Activated T-helper 1 cell treated with anti-CD3 and anti-CD28 coated beads, Interleukin-12 subunit alpha, Interleukin-12 subunit beta, Interleukin-2, Interleukin-4 antibody, amounts not matched to agents 30 ng/mL and 10 ng/mL and 1 ng/mL, durations not matched to agents 14 hours and 24 hours and 36 hours (primary cell): ENCODE measurements at regions of chr1 and their contacts with region 1.

Region 1: GRCh38 chr1:179142889-179143299 is 61.0 kb downstream of the TOR3A start:
- DNase-seq: no peak
- H3K4me3 Mint-ChIP-seq: peak overlapping the region; percentile 63
- H3K27ac Mint-ChIP-seq: no peak overlapping the region
- H3K4me1 Mint-ChIP-seq: peaks cover 31% of the 10 kb centered on the region
- H3K27me3 Mint-ChIP-seq: no peaks in the 10 kb centered on the region

Region 2: DNA sequence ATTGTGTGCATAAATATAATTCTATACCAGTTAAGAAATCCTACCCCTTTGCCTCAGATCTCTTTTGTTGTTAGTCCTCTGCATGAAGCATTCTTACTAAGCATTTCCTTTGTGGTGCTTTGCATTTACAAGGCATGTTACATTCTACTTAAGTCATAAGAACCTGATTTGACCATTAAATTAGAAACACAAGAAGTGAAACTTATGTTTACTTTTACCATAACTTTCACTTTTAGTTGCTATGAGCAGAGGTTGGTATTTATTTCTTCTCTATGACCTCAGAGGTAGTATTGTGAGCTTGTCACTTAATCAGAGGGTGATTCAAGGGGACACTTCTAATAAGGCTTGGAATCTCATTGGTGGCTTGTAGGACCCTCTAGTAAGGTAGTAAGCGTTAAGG is 108.2 kb before region 1 on chr1:
- intact Hi-C with region 1: loop called (anchors 2 kb)
- DNase-seq: no peak
- H3K4me3 Mint-ChIP-seq: no peak overlapping the region
- H3K27ac Mint-ChIP-seq: peak overlapping the region; percentile 82
- H3K4me1 Mint-ChIP-seq: peaks cover 80% of the 10 kb centered on the region
- H3K27me3 Mint-ChIP-seq: no peaks in the 10 kb centered on the region

Region 3: DNA sequence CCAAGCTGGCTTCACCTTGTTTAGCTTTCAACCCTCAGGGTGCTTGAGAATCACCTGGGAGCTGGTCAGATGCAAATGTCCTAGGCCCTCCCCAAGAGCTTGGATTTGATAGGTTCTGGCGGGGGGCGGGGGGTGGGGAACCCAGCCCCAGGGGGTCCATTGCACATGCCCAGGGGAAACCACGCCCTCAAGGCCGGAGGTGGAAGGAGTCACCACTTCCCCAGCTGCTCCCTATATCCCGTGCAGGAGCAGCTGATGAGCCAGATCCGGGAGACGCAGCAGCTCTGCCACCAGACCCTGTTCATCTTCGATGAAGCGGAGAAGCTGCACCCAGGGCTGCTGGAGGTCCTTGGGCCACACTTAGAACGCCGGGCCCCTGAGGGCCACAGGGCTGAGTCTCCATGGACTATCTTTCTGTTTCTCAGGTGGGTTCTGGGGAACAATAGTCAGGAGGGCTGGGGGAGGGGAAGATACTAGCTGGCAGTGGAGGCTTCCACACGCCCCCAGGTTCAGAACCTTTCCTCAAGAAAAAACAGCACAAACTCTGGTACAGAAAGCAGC is 55.1 kb before region 1 on chr1:
- intact Hi-C with region 1: no loop called
- DNase-seq: no peak
- H3K4me3 Mint-ChIP-seq: no peak overlapping the region
- H3K27ac Mint-ChIP-seq: no peak overlapping the region
- H3K4me1 Mint-ChIP-seq: peaks cover 17% of the 10 kb centered on the region
- H3K27me3 Mint-ChIP-seq: no peaks in the 10 kb centered on the region

Region 4: DNA sequence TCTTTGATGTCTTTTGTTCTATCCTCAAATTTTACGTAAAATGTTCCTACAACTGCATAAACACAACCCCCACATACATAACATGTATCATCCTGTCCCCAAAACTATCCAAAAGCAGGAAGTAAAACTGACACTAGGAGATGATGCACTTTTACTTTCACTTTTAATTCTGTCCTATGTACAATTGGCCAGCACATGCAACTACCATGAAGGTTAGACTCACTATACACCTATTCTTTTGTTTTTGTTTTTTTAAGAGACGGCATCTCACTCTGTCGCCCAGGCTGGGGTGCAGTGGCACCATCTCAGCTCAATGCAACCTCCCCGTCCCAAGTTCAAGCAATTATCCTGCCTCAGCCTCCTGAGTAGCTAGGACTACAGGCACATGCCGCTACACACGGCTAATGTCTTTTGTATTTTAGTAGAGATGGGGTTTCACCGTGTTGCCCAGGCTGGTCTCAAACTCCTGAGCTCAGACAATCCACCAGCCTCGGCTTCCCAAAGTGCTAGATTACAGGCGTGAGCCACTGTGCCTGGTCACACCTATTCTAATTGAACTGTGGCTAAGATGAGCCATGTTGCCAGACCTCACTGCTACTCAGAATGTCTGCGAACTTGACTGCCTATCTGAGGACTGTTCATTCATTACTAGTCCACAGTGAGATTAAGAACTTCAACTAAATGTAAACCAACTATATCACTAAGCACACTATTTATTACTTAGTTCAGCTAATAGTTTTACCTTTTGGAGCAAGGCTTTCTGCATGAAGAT is 13.0 kb before region 1 on chr1:
- intact Hi-C with region 1: loop called (anchors 1 kb)
- DNase-seq: no peak
- H3K4me3 Mint-ChIP-seq: peak overlapping the region; percentile 64
- H3K27ac Mint-ChIP-seq: peak overlapping the region; percentile 88
- H3K4me1 Mint-ChIP-seq: peaks cover 18% of the 10 kb centered on the region
- H3K27me3 Mint-ChIP-seq: no peaks in the 10 kb centered on the region

Region 5: DNA sequence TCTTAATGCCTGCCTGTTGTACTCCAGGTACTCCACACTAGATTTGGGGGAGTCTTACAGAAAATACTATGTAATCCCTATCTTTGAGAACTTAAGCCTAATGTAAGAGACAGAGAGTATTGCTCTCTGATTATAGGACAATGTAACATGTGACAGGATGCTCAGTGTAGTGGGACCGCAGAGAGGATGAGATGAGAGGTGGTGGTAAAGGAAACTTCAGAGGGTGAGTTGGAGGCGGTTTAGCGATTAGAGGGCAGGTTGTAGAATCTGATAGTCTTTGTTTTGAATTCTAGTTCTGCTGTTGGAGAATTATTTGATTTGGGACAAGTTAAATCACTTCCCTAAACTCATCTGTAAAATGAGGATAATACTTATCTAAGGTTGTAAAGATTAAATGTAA is 156.1 kb after region 1 on chr1:
- intact Hi-C with region 1: loop called (anchors 2 kb)
- DNase-seq: peak; percentile 51
- H3K4me3 Mint-ChIP-seq: peak overlapping the region; percentile 6
- H3K27ac Mint-ChIP-seq: peak overlapping the region; percentile 49
- H3K4me1 Mint-ChIP-seq: peaks cover 67% of the 10 kb centered on the region
- H3K27me3 Mint-ChIP-seq: no peaks in the 10 kb centered on the region